B cell (primary cell): ENCODE measurements at regions of chr6 and their contacts with region 1.

Region 1: GRCh38 chr6:89145787-89146646 is at the start of gene PM20D2:
- DNase-seq: peak; percentile 78
- ATAC-seq: peak; percentile 77
- H3K4me3 ChIP-seq: peak within 1 kb of the TSS; percentile 65 to 85 (median 73)
- H3K4me3 Mint-ChIP-seq: peak within 1 kb of the TSS; percentile 95
- H3K27ac ChIP-seq: peak within 1 kb of the TSS; percentile 87 to 88
- H3K27ac Mint-ChIP-seq: peak within 1 kb of the TSS; percentile 94
- H3K4me1 ChIP-seq: peaks cover 9 to 11% of the 10 kb centered on the region in 2 donors
- H3K4me1 Mint-ChIP-seq: peaks cover 28% of the 10 kb centered on the region
- H3K27me3 ChIP-seq: no peaks in the 10 kb centered on the region
- H3K27me3 Mint-ChIP-seq: no peaks in the 10 kb centered on the region
- CTCF ChIP-seq: no peak
- total RNA-seq, gene PM20D2: 15.3 and 16.4 TPM in 2 replicates

Region 2: DNA sequence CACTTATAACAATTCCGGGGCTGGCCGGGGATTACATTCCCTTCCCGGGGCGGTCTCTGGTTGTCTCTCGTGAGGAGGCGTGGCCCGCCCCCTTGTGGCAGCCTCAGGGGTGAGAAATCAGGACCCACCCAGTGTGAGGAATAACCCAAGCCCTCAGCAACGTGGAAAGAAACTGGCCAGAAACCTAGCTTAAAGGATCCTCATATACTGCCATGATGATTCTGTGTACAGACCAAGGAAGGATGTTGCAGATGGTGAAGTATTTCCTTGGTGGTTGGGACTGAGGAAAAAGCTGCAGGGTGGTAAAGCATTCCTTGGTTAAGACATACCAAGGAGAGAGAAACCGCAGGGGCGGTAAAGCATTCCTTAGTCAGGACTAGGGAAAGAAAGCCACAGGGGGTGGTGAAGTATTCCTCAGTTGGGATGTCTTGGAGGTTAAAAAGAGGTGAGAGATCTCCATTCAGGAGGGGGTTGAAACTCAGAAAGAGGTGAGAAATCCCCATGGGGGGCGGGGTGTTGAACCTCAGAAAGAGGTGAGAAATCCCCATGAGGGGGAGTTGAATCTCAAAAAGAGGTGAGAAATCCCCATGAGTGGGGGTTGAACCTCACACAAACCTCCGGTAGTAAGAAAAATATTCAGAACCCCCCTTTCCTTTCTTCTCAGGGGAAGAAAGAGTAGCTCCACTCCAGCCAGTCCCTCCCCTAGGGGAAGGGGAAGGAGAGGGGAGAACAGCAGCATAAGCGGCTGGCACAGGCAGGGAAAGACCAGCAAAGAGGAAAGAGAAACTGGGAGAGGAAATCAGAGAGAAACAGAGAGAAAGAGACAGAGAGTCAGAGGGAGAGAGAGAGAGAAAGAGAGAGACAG is 420.7 kb before region 1 on chr6:
- CTCF ChIA-PET with region 1: no interaction called
- POLR2A ChIA-PET with region 1: no interaction called
- intact Hi-C with region 1: no loop called
- DNase-seq: peak; percentile 22
- ATAC-seq: no peak
- H3K4me3 ChIP-seq: no peak overlapping the region
- H3K4me3 Mint-ChIP-seq: no peak overlapping the region
- H3K27ac ChIP-seq: no peak overlapping the region
- H3K27ac Mint-ChIP-seq: no peak overlapping the region
- H3K4me1 ChIP-seq: peaks cover 0 to 6% of the 10 kb centered on the region in 2 donors
- H3K4me1 Mint-ChIP-seq: peaks cover 10% of the 10 kb centered on the region
- H3K27me3 ChIP-seq: no peaks in the 10 kb centered on the region
- H3K27me3 Mint-ChIP-seq: no peaks in the 10 kb centered on the region
- CTCF ChIP-seq: no peak

Region 3: GRCh38 chr6:89080542-89081422 is 65.2 kb before region 1 on chr6 and contains the start of gene PNRC1:
- CTCF ChIA-PET with region 1: interaction called, 8 read pairs
- POLR2A ChIA-PET with region 1: interaction called, 40 read pairs
- intact Hi-C with region 1: loop called (anchors 1 kb)
- DNase-seq: peak; percentile 100
- ATAC-seq: peak; percentile 76
- H3K4me3 ChIP-seq: peak within 1 kb of the TSS; percentile 81 to 100 (median 98)
- H3K4me3 Mint-ChIP-seq: peak within 1 kb of the TSS; percentile 99
- H3K27ac ChIP-seq: peak within 1 kb of the TSS; percentile 99
- H3K27ac Mint-ChIP-seq: peak within 1 kb of the TSS; percentile 98
- H3K4me1 ChIP-seq: peaks cover 25 to 29% of the 10 kb centered on the region in 2 donors
- H3K4me1 Mint-ChIP-seq: peaks cover 38% of the 10 kb centered on the region
- H3K27me3 ChIP-seq: no peaks in the 10 kb centered on the region
- H3K27me3 Mint-ChIP-seq: no peaks in the 10 kb centered on the region
- CTCF ChIP-seq: no peak
- total RNA-seq, gene PNRC1: 460 and 486 TPM in 2 replicates

Region 4: GRCh38 chr6:89117211-89118108 is 28.6 kb before region 1 on chr6 and contains the start of gene SRSF12:
- CTCF ChIA-PET with region 1: interaction called, 4 read pairs
- POLR2A ChIA-PET with region 1: no interaction called
- intact Hi-C with region 1: loop called (anchors 2 kb)
- DNase-seq: peak; percentile 57
- ATAC-seq: peak; percentile 83
- H3K4me3 ChIP-seq: peak within 1 kb of the TSS; percentile 36 to 67 (median 61)
- H3K4me3 Mint-ChIP-seq: peak within 1 kb of the TSS; percentile 83
- H3K27ac ChIP-seq: no peak within 1 kb of the TSS
- H3K27ac Mint-ChIP-seq: peak within 1 kb of the TSS; percentile 20
- H3K4me1 ChIP-seq: peaks cover 6 to 10% of the 10 kb centered on the region in 2 donors
- H3K4me1 Mint-ChIP-seq: peaks cover 9% of the 10 kb centered on the region
- H3K27me3 ChIP-seq: peaks cover 0 to 14% (median 2%) of the 10 kb centered on the region in 4 experiments
- H3K27me3 Mint-ChIP-seq: peaks cover 18% of the 10 kb centered on the region
- CTCF ChIP-seq: no peak
- total RNA-seq, gene SRSF12: not detected in 2 replicates